PC-9 (cell line): ENCODE measurements at regions of chr21 and their contacts with region 1.

Region 1: GRCh38 chr21:44927587-44928461 is 7.1 kb upstream of the ITGB2 start:
- DNase-seq: peak; percentile 92 to 95
- H3K4me3 ChIP-seq: peak overlapping the region; percentile 39; the same call in 1 of the 2 replicates
- H3K27ac ChIP-seq: peak overlapping the region; percentile 97
- H3K4me1 ChIP-seq: peaks cover 62% of the 10 kb centered on the region
- H3K27me3 ChIP-seq: no peaks in the 10 kb centered on the region
- CTCF ChIP-seq: peak; percentile 45; the same call in 1 of the 2 replicates

Region 2: DNA sequence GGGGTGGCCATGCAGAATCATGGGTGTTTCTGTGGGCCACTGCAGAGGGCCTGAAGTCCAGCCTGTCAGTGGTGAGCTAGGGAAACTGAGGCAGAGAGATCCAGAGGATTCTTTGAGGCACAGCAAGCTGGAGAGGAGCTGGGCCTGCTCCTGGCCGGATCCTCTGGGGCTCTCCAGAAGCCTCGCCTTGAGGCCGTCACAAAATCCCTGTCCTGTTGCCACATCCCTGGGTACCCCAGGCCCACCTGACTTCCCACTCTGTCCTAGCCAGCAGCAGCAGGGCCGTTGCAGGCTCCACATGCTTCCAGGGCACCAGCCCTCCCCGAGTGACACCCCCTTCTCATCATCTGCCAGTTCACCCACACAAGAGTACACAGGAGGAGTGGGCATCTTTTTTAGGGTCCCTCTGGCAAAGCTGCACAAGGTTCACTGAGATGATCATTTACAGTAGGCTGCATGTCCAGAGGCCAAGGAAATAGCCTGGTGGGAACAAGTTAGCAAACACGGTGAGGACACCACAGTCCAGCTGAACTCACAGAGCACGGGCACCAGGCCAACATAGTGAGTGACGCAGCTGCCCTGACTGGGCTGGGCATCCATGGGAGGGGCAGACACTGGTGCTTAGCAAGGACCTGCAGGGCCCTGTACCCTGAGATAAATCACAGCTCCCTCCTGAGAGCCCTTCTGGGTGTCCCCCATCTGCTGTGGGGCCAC is 191.4 kb before region 1 on chr21:
- CTCF ChIA-PET with region 1: interaction called, 9 read pairs
- POLR2A ChIA-PET with region 1: interaction called, 13 read pairs
- intact Hi-C with region 1: no loop called
- DNase-seq: peak; percentile 74 to 84
- H3K4me3 ChIP-seq: no peak overlapping the region
- H3K27ac ChIP-seq: no peak overlapping the region
- H3K4me1 ChIP-seq: peaks cover 10% of the 10 kb centered on the region; the same call in 1 of the 2 replicates
- H3K27me3 ChIP-seq: peaks cover 26% of the 10 kb centered on the region
- CTCF ChIP-seq: no peak

Region 3: DNA sequence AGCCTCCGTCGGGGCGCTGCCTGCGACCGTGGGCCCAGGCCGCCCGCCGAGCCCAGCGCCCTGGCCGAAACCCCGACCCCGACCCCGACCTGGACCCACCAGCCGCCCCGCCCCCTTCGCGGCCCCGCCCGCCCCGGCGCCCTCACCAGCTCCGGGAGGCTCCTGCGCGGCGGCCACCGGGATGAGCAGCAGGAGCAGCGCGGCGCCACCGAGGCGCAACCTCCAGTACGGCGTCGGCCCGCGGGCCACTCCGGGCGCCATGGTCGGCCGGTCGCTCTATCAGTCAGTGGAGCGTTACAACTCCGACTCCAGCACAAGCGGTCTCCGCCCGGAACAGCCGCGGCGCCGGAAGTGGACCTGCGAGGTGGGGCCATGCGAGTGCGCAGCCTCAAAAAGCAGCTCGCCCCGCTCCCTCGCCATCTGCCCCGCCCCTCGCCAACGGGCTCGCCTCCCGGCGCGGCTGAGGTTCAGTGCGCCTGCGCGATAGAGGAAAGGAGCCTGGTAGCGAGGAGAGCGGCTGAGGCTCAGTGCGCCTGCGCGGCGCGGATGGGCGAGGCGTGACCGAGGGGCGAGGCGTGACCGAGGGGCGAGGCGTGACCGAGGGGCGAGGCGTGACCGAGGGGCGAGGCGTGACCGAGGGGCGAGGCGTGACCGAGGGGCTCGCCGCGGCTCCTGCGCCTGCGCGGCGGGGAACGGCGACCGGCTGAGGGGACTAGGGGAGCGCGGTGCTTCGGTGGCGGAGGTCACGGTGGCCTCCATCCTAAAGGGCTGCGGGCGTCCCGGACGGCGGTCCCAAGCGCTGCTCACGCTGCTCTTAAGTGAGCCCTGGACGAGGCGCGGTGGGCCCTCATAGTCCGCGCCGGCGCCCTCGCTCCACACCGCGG is 54.2 kb before region 1 on chr21 and contains the start of gene PTTG1IP:
- CTCF ChIA-PET with region 1: no interaction called
- POLR2A ChIA-PET with region 1: interaction called, 11 read pairs
- intact Hi-C with region 1: loop called (anchors 1 kb)
- DNase-seq: peak; percentile 86 to 97
- H3K4me3 ChIP-seq: peak within 1 kb of the TSS; percentile 75
- H3K27ac ChIP-seq: peak within 1 kb of the TSS; percentile 87
- H3K4me1 ChIP-seq: peaks cover 56% of the 10 kb centered on the region
- H3K27me3 ChIP-seq: no peaks in the 10 kb centered on the region
- CTCF ChIP-seq: no peak
- total RNA-seq, gene PTTG1IP: 162 and 174 TPM in 2 replicates

Region 4: GRCh38 chr21:44892536-44893277 is 35.1 kb before region 1 on chr21:
- CTCF ChIA-PET with region 1: interaction called, 32 read pairs
- POLR2A ChIA-PET with region 1: no interaction called
- intact Hi-C with region 1: loop called (anchors 2 kb)
- DNase-seq: peak in 1 of 2 experiments; percentile 64
- H3K4me3 ChIP-seq: no peak overlapping the region
- H3K27ac ChIP-seq: no peak overlapping the region
- H3K4me1 ChIP-seq: no peaks in the 10 kb centered on the region
- H3K27me3 ChIP-seq: no peaks in the 10 kb centered on the region
- CTCF ChIP-seq: peak; percentile 84

Region 5: DNA sequence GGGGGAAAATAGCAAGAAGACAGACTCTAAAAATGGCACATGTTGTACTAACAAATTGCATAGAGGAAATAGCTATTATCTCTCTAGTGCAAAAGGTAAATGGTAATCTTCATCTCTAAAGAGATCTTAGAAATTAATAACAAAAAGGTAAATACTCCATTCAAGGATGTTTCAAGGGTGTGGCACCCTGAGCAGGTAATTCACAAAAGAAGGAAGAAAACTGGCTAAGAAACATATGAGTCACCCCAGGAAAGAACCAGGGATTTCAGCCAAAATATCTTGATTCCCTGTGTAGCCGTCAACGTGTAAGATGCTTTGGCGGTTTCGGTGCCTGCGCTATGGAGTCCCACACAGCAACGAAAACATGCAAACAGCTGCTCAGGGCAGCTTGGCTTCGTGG is 10.9 kb before region 1 on chr21:
- CTCF ChIA-PET with region 1: interaction called, 9 read pairs
- POLR2A ChIA-PET with region 1: interaction called, 23 read pairs
- intact Hi-C with region 1: loop called (anchors 1 kb)
- DNase-seq: peak in 1 of 2 experiments; percentile 86
- H3K4me3 ChIP-seq: peak overlapping the region; percentile 53; the same call in 1 of the 2 replicates
- H3K27ac ChIP-seq: peak overlapping the region; percentile 94
- H3K4me1 ChIP-seq: peaks cover 60% of the 10 kb centered on the region
- H3K27me3 ChIP-seq: no peaks in the 10 kb centered on the region
- CTCF ChIP-seq: no peak